ENCODE measurements at regions of chr4 and their contacts with region 1.

Region 1: GRCh38 chr4:173025131-173025530 is 143.5 kb upstream of the GALNT7 start:
- DNase-seq: peak; percentile 81
- H3K4me3 Mint-ChIP-seq: no peak overlapping the region
- H3K27ac Mint-ChIP-seq: no peak overlapping the region
- H3K4me1 Mint-ChIP-seq: no peaks in the 10 kb centered on the region
- H3K27me3 Mint-ChIP-seq: no peaks in the 10 kb centered on the region
- CTCF ChIP-seq: peak; percentile 74

Region 2: GRCh38 chr4:172819353-172819752 is 205.8 kb before region 1 on chr4:
- CTCF ChIA-PET with region 1: no interaction called
- POLR2A ChIA-PET with region 1: no interaction called
- intact Hi-C with region 1: no loop called
- DNase-seq: no peak
- H3K4me3 Mint-ChIP-seq: no peak overlapping the region
- H3K27ac Mint-ChIP-seq: no peak overlapping the region
- H3K4me1 Mint-ChIP-seq: no peaks in the 10 kb centered on the region
- H3K27me3 Mint-ChIP-seq: peaks cover 100% of the 10 kb centered on the region
- CTCF ChIP-seq: no peak

Region 3: DNA sequence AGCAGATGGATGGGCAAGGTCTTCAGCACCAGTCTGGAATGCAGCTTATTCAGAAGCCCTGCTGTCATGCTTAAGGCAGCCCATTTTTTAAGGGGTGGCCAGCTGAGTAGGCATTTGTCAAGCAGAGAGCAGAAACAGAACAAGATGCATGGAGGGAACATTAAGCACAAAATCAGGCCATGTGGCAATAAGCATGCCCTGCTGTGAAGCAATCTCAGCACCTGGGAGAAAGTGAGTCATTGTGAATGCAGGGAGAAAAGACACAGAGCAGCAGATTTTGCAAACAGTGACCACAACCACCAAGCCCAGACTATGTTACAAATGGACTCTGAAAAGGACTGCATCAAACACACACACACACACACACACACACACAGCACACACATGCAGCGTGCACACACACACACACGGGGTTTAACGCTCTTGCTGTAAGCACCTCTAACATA is 49.4 kb after region 1 on chr4:
- CTCF ChIA-PET with region 1: interaction called, 3 read pairs
- POLR2A ChIA-PET with region 1: no interaction called
- intact Hi-C with region 1: loop called (anchors 2 kb)
- DNase-seq: peak; percentile 96
- H3K4me3 Mint-ChIP-seq: peak overlapping the region; percentile 13
- H3K27ac Mint-ChIP-seq: peak overlapping the region; percentile 59
- H3K4me1 Mint-ChIP-seq: peaks cover 29% of the 10 kb centered on the region
- H3K27me3 Mint-ChIP-seq: no peaks in the 10 kb centered on the region
- CTCF ChIP-seq: no peak

Region 4: DNA sequence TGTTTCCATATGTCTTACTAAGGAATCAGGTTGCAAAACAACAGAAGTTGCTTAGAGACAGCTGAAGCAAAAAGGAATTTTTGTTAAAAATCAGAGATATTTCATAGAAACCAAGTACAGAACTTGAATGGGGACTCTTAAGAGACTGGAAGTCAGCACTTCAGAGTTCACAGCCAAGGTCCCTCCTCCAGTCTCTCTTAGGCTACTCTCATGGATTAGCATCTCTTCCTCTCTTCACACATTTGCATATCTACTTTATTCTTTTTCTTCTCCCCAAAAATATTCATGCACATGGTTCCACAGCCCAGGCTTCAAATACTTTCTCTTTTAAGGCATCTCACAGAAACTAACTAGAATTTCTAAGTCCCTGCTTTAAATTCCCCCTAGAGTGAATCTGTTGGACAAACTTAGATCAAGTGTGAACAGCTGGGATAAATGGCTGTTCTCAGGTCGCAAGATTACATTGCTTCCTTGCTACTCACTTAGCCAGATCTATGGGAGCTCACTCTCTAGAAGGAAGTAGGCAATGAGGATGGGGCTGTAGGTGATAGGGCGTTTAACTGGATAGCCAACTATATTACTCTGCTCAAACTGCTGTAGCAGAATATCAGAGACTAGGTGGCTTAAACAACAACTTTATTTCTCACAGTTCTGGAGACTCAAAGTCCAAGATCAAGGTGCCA is 69.7 kb after region 1 on chr4:
- CTCF ChIA-PET with region 1: no interaction called
- POLR2A ChIA-PET with region 1: no interaction called
- intact Hi-C with region 1: no loop called
- DNase-seq: no peak
- H3K4me3 Mint-ChIP-seq: no peak overlapping the region
- H3K27ac Mint-ChIP-seq: no peak overlapping the region
- H3K4me1 Mint-ChIP-seq: no peaks in the 10 kb centered on the region
- H3K27me3 Mint-ChIP-seq: no peaks in the 10 kb centered on the region
- CTCF ChIP-seq: no peak

Region 5: DNA sequence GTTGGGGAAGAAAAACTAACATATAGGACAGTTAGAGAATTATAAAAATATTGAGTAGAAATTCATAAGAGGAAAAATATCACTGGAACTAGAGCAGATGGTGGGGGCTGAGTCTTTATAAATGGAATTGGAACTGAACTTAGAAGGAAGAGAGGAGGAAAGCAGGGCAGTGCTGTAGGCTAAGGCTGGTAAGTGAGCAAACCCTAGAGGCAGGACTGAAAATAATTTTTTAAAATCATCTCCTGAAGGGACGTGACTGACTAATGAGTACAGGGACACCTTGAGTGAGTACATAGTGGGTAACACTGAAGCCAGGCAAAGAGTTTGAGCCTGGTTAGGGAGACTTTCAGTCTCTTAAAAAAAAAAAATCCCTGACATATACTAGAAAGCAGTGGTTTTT is 206.8 kb after region 1 on chr4:
- CTCF ChIA-PET with region 1: interaction called, 9 read pairs
- POLR2A ChIA-PET with region 1: no interaction called
- intact Hi-C with region 1: loop called (anchors 1 kb)
- DNase-seq: peak; percentile 49
- H3K4me3 Mint-ChIP-seq: no peak overlapping the region
- H3K27ac Mint-ChIP-seq: peak overlapping the region; percentile 36
- H3K4me1 Mint-ChIP-seq: peaks cover 2% of the 10 kb centered on the region
- H3K27me3 Mint-ChIP-seq: no peaks in the 10 kb centered on the region
- CTCF ChIP-seq: peak; percentile 44

Region 6: GRCh38 chr4:173301518-173302201 is 276.5 kb after region 1 on chr4:
- CTCF ChIA-PET with region 1: interaction called, 10 read pairs
- POLR2A ChIA-PET with region 1: interaction called, 3 read pairs
- intact Hi-C with region 1: loop called (anchors 1 kb)
- DNase-seq: peak; percentile 45
- H3K4me3 Mint-ChIP-seq: no peak overlapping the region
- H3K27ac Mint-ChIP-seq: no peak overlapping the region
- H3K4me1 Mint-ChIP-seq: no peaks in the 10 kb centered on the region
- H3K27me3 Mint-ChIP-seq: no peaks in the 10 kb centered on the region
- CTCF ChIP-seq: peak; percentile 41

Region 7: DNA sequence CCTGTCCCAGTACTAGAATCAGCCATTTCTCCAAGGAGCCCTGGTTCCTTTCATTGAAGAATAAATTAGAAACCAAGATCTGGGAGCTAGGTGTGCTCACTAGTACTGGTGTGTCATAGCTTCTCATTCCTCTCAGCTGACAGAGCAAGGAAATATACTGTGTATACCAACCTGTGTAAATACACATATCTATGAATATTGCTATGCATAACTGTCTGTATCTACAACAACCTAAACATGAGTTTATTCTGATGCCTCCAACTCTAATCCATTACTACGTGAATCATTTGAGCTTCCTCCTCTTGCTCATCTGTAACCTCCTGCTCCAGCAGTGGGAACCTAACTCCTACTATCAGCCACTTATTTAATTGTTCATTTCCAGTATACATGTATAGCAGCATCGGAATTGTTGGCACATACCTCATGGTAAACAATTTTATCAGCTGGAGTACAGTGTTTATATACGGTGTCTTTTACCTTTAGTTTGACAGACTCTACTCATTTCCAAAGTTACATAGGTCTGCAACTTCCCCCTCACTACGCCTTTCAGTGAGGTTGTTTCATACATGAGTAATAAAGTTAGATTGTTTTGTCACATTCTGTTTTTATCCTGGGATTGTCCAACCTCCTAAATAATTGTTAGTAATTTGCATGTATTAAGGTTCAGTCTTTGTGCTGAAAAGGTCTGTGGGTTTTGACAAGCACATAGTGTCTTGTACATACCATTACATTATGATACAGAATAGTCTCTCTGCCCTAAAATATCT is 380.9 kb after region 1 on chr4:
- CTCF ChIA-PET with region 1: no interaction called
- POLR2A ChIA-PET with region 1: no interaction called
- intact Hi-C with region 1: no loop called
- DNase-seq: no peak
- H3K4me3 Mint-ChIP-seq: no peak overlapping the region
- H3K27ac Mint-ChIP-seq: no peak overlapping the region
- H3K4me1 Mint-ChIP-seq: peaks cover 10% of the 10 kb centered on the region
- H3K27me3 Mint-ChIP-seq: no peaks in the 10 kb centered on the region
- CTCF ChIP-seq: no peak

Measured in MCF 10A (cell line).